Dorsolateral prefrontal cortex (tissue), 120 donors: ENCODE measurements at regions of chr17 and their contacts with region 1.

Region 1: GRCh38 chr17:8125157-8125946 is 1.4 kb upstream of the HES7 start:
- DNase-seq: peak; percentile 73 to 93 (median 86)
- H3K4me3 ChIP-seq: peak overlapping the region; percentile 56 to 90 (median 75)
- H3K27ac ChIP-seq: peak overlapping the region in 53 of 59 donors; percentile 44 to 87 (median 75)
- H3K27me3 ChIP-seq: no peaks in the 10 kb centered on the region
- CTCF ChIP-seq: peak in 10 of 56 donors; percentile 8 to 40 (median 21)

Region 2: DNA sequence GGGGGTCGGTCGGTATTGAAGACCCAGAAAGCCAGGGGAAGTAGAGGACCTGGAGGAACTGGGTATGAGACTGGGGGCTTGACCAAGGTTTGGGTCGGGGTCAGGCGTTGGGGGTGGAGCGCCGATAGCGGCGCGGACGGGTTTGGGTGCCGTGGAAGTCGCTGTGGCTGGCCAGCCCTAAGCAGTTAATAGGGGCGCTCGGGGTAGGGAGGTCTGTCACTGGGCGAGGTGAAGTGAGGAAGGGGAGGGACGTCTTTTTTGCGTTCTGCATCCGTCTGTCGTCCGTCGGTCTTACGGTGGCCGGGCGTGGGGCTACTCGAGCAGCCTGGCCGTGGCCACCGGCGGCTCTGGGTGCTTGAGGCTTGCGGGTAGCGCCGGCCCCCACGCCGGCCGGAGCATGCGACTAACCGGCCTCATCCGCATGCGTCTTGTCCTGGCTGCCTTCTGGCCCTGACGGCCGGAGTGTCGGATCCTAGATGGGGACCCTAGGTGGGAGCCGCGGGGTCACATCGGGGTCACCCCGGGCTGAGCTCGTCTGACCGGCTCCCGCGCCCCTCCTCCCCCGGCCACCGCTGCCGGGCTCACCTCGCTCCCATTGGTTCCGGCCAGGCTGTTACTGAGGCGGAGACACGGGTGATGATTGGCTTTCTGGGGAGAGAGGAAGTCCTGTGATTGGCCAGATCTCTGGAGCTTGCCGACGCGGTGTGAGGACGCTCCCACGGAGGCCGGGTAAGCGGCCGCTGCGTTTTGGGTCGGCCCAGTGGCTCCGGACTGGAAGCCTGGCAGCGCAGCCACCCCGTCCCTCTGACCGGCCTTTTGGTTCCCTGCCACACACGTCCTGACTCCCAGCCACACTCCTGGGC is 280.8 kb before region 1 on chr17:
- intact Hi-C with region 1: no loop called
- DNase-seq: peak; percentile 85 to 95 (median 94)
- H3K4me3 ChIP-seq: peak overlapping the region; percentile 65 to 94 (median 85)
- H3K27ac ChIP-seq: peak overlapping the region; percentile 44 to 100 (median 98)
- H3K27me3 ChIP-seq: no peaks in the 10 kb centered on the region
- CTCF ChIP-seq: peak in 16 of 56 donors; percentile 7 to 52 (median 20)

Region 3: DNA sequence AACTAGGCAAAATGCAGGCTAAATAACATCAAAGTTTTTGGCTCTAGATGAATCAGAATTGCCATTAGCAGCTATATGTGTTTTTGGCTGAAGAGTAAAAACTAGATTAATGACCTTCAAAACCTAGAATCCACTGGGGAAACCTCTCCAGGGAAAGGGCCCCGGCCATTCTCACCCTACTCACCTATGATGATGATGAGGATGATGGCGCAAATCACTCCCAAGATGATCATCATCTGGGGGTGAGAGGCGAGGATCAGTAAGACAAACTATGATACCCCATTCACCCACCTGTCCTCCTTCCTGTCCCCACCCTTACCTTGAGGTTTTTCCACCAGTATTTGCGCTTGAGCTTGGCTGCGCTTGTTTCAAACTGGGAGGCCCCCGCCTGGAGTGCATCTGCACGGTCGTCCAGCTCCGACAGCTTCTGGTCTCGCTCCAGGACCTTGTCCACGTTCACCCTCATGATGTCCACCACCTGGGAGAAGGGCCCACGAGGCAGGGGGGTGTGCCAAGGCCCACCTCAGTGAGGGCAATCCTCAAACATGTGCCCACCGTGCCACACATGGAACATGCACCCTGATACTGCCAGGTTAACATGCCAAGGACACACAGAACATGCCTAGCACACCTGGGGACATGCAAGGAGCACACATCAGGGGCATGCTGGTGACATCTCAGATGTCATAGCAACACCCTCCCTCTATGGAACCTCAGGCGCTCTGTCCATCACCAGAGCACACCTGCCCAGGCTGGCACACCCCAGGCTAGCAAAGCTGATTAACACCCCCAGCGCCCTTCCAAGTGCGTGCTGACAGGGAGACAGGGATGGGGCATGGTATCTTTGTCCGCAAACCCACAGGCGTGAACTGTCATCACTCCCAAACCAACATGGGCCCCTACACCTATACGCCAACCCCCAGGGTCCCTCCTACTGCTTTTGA is 36.2 kb after region 1 on chr17:
- intact Hi-C with region 1: loop called (anchors 1 to 2 kb)
- DNase-seq: no peak
- H3K4me3 ChIP-seq: peak overlapping the region; percentile 79 to 100 (median 99)
- H3K27ac ChIP-seq: peak overlapping the region; percentile 96 to 100 (median 100)
- H3K27me3 ChIP-seq: no peaks in the 10 kb centered on the region
- CTCF ChIP-seq: no peak

Region 4: GRCh38 chr17:8209909-8210760 is 84.8 kb after region 1 on chr17 and contains the start of gene AURKB:
- intact Hi-C with region 1: no loop called
- DNase-seq: peak; percentile 81 to 95 (median 94)
- H3K4me3 ChIP-seq: peak within 1 kb of the TSS; percentile 30 to 82 (median 65)
- H3K27ac ChIP-seq: peak within 1 kb of the TSS in 33 of 59 donors; percentile 19 to 85 (median 59)
- H3K27me3 ChIP-seq: no peaks in the 10 kb centered on the region
- CTCF ChIP-seq: no peak
- total RNA-seq, gene AURKB: 0.75 to 3.8 (median 1.2) TPM in 12 of 120 experiments, not detected in the others